ENCODE measurements at regions of chr15 and their contacts with region 1.

Region 1: GRCh38 chr15:90320061-90320884 is 31.8 kb upstream of the ZNF774 start:
- DNase-seq: peak; percentile 56 to 90 (median 77)

Region 2: GRCh38 chr15:90482124-90483011 is 162.1 kb after region 1 on chr15:
- intact Hi-C with region 1: loop called (anchors 2 kb)
- DNase-seq: peak in 39 of 42 donors; percentile 45 to 91 (median 76)

Region 3: DNA sequence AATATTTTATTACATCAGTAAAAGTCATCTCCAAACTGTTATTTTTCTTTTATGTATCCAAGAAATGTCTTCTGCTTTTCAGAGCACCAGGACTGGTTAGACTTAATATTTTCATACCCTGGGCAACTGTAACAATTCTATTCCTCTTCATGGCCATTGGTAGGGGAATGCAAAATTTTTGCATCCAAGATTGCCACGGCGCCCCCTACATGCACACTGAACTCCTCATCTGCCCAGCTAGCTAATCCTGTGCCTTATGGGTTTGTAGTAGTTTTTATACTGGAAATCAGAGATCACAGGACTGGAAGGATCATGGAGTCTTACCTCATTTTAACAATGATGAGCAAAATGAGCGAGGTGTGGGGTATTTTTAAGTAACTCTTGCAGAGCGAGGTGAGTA is 283.6 kb after region 1 on chr15:
- intact Hi-C with region 1: loop called (anchors 10 kb)
- DNase-seq: peak in 9 of 42 donors; percentile 33 to 78 (median 51)

Measured in head of caudate nucleus (tissue), 42 donors.